ENCODE measurements at regions of chr10 and their contacts with region 1.

Region 1: DNA sequence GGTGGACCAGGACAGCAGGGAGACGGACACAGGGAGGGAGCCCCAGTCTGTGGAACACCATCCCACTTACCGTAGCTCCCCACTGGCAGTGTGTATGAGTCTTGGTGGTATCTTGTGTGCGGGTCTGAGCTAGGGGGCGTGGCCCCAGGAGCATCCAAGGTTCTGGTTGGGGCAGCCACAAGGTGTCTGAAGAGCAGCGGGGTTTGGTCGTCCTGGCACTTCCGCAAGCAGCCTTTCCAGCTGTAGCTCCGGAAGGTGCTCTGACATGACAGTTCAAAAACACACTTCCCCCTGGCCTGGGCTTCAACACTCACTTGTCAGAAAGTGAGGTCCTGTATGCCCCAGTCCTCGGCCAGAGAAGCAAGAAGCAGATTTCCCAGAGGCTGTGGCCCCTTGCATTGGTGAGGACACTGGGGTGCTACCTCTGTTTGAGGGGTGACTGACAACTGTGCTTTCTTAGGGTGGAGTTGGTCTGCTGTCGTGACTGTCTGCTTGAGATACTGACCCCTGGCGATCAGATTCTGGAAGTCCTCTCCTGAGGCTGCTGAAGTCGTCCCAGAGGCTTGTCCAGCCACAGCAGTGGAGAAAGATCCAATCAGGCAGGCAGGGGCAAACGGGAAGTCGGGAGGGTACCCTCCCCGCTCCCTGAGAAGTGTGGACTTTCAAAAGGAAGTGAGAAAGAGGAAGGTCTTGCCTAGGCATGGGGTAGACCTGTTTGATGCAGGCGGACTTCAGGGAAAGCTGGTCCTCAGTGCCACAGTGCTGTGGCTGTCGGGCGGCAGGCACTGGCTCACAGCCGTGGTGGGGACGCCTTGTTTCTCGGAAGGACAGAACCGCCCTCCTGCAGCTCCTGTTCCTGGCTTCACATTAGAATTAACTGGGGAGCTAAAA is 51.4 kb upstream of the PFKFB3 start:
- DNase-seq: no peak
- H3K4me3 ChIP-seq: no peak overlapping the region
- H3K27me3 ChIP-seq: no peaks in the 10 kb centered on the region
- CTCF ChIP-seq: peak; percentile 80

Region 2: GRCh38 chr10:6009150-6009549 is 142.2 kb before region 1 on chr10:
- CTCF ChIA-PET with region 1: no interaction called
- POLR2A ChIA-PET with region 1: no interaction called
- DNase-seq: no peak
- H3K4me3 ChIP-seq: no peak overlapping the region
- H3K27me3 ChIP-seq: peaks cover 3% of the 10 kb centered on the region; the same call in 1 of the 2 replicates
- CTCF ChIP-seq: no peak

Region 3: DNA sequence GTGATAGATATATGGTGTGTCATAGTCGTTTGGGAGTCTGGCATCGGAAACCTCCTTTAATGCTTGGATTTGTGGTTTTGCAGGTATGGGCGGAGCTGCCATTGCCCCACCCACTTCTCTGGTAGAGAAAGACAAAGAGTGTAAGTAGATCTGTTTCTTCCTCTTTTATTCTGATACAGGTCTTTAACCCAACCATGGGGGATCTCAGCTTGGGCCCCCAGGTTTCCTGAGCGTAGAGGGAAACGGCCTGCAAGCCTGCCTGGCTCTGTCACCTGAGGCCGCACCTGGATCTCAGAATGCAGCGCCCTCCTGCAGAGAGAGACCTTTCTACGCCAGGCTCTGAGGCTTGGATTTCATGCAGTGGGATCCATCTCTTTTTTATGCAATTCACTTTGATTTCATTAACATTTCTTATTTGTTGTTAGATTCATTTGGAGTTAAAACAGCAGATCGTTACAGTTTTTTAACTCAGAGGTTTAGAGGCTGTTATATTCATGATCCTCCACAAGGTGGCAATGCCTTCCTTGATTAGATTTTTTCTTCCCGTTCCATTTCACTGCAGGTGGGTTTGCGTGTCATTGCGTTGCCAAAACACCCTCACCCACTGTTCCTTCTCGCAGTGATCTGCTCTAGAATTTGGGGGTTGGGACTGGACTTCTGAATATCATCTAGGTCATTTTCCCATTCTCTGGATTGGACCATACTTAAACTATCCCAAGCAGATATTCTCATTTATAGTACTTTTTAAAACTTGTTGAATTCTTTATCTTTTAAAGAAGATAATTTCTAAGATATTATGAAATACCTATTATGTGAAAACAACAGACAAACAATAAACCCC is 42.5 kb before region 1 on chr10:
- CTCF ChIA-PET with region 1: interaction called, 11 read pairs
- POLR2A ChIA-PET with region 1: no interaction called
- DNase-seq: no peak
- H3K4me3 ChIP-seq: no peak overlapping the region
- H3K27me3 ChIP-seq: no peaks in the 10 kb centered on the region
- CTCF ChIP-seq: peak; percentile 64

Region 4: DNA sequence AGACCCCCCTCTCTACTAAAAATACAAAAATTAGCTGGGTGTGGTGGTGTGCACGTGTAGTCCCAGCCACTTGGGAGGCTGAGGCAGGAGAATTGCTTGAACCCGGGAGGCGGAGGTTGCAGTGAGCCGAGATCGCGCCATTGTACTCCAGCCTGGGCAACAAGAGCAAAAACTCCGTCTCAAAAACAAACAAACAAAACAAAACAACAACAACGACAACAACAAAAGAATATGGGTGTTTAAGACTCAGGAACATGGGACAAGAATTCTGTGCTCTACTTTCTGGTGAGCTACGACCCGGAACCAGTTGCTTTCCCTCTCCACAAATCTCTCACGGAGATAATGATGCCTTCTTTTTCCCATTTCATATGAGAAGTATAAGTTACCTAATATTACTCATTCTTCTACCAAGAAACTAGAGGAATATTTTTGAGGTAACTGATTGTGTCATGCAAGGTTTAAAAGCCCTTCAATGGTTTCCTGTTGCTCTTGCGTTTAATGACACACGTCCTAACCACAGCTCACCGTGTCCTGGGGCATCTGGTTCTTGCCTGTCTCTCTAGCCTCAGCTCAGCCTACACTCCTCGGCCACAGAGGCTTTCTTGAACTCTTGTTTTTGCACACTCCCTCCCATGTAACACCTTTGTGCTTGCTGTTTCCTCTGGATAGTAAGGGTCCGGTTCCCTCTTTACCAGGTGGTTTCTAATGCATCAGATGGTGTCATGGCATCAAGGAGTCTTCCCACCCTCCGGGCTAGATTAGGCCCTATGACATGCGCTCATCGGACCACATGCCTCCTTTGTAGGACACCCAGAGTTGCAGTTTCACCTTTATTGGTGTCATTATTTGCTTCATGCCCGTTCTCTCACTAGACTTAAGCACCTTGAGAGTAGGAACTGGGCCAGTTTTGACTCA is 118.9 kb after region 1 on chr10:
- CTCF ChIA-PET with region 1: no interaction called
- POLR2A ChIA-PET with region 1: no interaction called
- DNase-seq: no peak
- H3K4me3 ChIP-seq: no peak overlapping the region
- H3K27me3 ChIP-seq: no peaks in the 10 kb centered on the region
- CTCF ChIP-seq: no peak